ENCODE measurements at regions of chr11 and their contacts with region 1.

Region 1: DNA sequence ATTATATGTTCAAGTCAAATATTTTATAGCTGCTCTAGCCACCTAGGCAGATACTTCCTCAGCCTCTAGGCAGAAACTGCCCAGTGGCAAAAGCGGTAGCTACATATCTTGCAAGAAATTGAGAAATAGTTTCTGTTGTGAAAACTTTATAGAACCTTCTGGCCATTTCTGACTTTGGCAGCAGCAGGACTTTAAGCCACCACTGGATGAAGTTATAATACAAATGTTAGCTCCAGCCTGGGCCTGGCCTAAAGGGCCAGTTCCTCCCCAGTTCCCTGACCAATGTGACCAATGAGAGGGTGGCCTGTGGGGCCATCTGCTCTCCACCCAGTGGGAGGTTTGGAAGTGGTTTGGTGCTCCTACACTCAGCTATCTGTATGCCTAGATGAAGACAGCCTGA is 254.0 kb upstream of the NARS2 start:
- DNase-seq: no peak
- H3K4me3 ChIP-seq: no peak overlapping the region
- H3K27ac ChIP-seq: peak overlapping the region in 1 of 2 experiments; percentile 85; a peak in 2 of 4 replicates
- H3K4me1 ChIP-seq: peaks cover 0 to 31% of the 10 kb centered on the region in 2 experiments; a peak in 2 of 4 replicates
- H3K27me3 ChIP-seq: no peaks in the 10 kb centered on the region
- CTCF ChIP-seq: no peak
- EP300 ChIP-seq: no peak
- RAD21 ChIP-seq: no peak

Region 2: DNA sequence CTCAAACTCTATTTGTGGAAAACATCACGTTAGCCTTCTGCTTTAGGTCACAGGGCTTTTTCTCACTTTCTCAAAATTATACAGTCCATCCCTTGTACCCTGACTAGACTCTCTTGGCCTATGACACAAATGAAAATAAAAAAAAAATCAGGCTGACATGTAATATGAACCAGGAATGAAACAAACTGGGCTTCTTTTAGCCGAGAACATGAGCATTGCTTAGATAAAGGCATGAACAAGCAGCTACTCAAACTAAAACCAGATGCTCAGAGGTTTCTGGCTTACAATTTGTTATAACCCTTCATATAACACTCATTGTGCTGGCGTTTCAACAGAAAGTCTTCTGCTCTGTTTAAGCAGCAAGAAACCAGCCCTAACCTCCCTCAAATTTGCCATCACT is 11.5 kb after region 1 on chr11:
- CTCF ChIA-PET with region 1: interaction called, 10 read pairs
- POLR2A ChIA-PET with region 1: no interaction called
- DNase-seq: peak; percentile 36
- H3K4me3 ChIP-seq: no peak overlapping the region; a peak in 1 of 4 replicates
- H3K27ac ChIP-seq: peak overlapping the region; percentile 69 to 93; a peak in 3 of 4 replicates
- H3K4me1 ChIP-seq: peaks cover 0 to 27% of the 10 kb centered on the region in 2 experiments; a peak in 3 of 4 replicates
- H3K27me3 ChIP-seq: no peaks in the 10 kb centered on the region
- CTCF ChIP-seq: no peak
- EP300 ChIP-seq: peak in 1 of 2 experiments; percentile 50; a peak in 2 of 4 replicates
- RAD21 ChIP-seq: 0 out of 2 replicates have a peak, but pooled peaks have one; percentile 9

Region 3: DNA sequence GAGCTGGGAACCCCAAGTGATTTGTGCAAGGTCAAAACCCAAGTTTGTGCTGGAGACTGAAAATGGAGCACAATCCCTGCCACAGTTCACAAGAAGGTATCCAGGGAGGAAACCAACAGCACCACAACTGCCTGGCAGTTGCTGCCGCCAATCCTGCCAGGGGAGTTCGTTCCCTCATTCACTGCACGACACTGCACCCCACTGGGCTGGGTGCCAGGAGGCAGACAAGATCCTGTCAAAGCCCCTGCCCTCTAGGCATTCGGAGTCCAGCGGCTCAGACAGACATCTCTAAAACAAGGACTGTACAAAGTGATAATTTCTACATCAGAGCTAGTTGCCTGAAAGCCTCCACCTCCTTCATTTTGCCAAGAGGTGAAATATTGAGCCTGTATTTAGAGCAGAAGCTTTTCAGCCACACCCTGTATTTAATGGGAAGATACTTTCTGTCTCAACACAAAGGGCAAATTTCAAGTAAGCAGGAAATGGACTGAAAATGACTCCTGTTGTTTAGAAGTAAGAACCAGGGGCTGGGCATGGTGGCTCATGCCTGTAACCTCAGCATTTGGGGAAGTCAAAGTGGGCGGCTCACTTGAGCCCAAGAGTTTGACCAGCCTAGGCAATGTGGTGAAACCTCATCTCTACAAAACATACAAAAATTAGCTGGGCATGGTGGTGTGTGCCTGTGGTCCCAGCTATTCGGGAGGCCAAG is 23.4 kb after region 1 on chr11:
- CTCF ChIA-PET with region 1: no interaction called
- POLR2A ChIA-PET with region 1: no interaction called
- DNase-seq: peak; percentile 72
- H3K4me3 ChIP-seq: no peak overlapping the region
- H3K27ac ChIP-seq: peak overlapping the region in 1 of 2 experiments; percentile 87; a peak in 2 of 4 replicates
- H3K4me1 ChIP-seq: peaks cover 0 to 59% of the 10 kb centered on the region in 2 experiments; a peak in 3 of 4 replicates
- H3K27me3 ChIP-seq: no peaks in the 10 kb centered on the region
- CTCF ChIP-seq: no peak
- EP300 ChIP-seq: no peak; a peak in 2 of 4 replicates
- RAD21 ChIP-seq: peak; percentile 20; the same call in 1 of the 2 replicates

Measured in SK-N-SH (cell line).